Activated naive CD4-positive, alpha-beta T cell treated with anti-CD3 and anti-CD28 coated beads for 36 hours (primary cell): ENCODE measurements at regions of chr5 and their contacts with region 1.

Region 1: DNA sequence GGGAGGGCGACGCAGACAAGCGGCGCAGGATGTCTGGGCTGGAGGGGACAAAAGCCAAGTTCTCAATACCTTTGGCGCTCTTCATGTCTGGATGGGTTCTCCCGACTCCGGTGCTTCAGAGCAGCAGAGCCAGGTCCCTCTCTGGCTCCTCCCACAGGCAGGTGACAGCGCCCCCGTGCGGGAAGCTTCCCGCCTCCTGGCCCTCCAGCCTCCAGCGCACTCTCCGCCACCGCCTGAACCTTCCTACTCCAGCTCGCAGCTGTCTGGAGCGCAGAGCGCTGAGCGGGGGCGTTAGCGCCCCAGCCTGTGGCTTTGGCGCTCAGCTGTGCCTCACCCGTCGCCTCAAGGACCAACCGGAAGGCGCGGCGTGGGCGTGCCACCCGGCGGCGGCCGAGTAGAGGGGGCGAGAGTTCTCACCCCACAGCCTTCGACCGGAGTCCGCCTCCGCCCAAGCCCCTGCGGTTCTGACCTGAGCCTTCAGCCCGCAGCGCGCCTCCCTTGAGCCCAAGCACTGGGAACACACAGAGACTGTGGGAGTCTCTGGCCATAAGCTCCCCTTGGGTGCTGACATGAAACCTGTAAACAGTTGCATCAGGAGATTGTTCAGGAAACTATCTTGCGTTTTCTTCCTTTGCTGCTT is at the start of gene SLCO4C1:
- DNase-seq: peak; percentile 88
- H3K4me3 Mint-ChIP-seq: peak within 1 kb of the TSS; percentile 76
- H3K27ac Mint-ChIP-seq: no peak within 1 kb of the TSS
- H3K4me1 Mint-ChIP-seq: peaks cover 19% of the 10 kb centered on the region
- H3K27me3 Mint-ChIP-seq: peaks cover 8% of the 10 kb centered on the region
- total RNA-seq, gene SLCO4C1: 0.07 TPM in 1 of 2 experiments, not detected in the other

Region 2: DNA sequence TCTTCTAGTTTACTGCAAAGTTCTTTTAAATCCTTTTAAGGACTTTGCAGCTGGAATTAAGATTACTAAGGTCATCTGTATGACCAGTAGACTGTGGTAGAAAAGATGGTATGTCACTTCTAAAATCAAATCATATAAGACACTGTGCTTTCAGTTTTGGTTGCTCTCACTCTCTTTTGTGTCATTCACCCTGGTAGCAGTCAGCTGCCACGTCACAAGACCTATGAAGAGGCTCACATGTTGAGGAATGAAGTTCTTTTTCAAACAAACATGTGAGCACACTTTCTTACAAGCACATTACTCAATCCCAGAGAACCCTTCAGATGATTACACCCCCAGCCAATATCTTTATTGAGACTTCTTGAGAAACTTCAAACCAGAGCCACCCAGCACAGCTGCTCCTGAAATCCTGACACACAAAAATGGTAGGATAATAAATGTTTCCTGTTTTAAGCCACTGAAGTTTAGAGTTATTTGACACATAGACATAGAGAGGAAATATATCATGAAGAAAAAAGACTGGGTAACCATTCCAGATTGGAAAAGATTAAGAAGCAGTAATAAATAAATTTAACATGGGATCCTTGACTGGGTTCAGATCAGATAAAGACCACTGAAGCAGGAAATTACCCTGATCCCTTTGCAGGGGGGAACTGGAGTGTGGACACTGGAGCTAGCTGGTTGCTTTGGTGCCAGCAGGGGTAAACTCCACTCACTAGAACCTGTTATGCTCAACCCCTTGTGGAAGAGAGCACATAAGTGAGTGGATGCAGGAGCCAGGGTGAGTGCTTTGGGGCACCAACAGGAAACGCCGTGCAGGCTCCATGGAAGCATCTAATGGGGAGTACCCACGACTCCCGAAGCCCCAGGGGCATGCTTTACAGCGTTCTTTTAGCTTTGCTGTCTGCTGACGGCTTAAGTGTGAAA is 64.3 kb before region 1 on chr5:
- CTCF ChIA-PET with region 1: no interaction called
- intact Hi-C with region 1: loop called (anchors 2 kb)
- DNase-seq: peak; percentile 29
- H3K4me3 Mint-ChIP-seq: no peak overlapping the region
- H3K27ac Mint-ChIP-seq: no peak overlapping the region
- H3K4me1 Mint-ChIP-seq: peaks cover 7% of the 10 kb centered on the region
- H3K27me3 Mint-ChIP-seq: no peaks in the 10 kb centered on the region